ENCODE measurements at regions of chr2 and their contacts with region 1.

Region 1: GRCh38 chr2:152335010-152335725 is at the start of gene FMNL2:
- DNase-seq: peak; percentile 76
- H3K4me3 ChIP-seq: peak within 1 kb of the TSS; percentile 81
- H3K27ac ChIP-seq: peak within 1 kb of the TSS; percentile 70 to 81
- H3K4me1 ChIP-seq: peaks cover 4% of the 10 kb centered on the region
- H3K27me3 ChIP-seq: no peaks in the 10 kb centered on the region
- CTCF ChIP-seq: peak in 1 of 4 experiments; percentile 19
- POLR2A ChIP-seq: peak; percentile 82
- total RNA-seq, gene FMNL2: 9.8 to 19.4 TPM

Region 2: DNA sequence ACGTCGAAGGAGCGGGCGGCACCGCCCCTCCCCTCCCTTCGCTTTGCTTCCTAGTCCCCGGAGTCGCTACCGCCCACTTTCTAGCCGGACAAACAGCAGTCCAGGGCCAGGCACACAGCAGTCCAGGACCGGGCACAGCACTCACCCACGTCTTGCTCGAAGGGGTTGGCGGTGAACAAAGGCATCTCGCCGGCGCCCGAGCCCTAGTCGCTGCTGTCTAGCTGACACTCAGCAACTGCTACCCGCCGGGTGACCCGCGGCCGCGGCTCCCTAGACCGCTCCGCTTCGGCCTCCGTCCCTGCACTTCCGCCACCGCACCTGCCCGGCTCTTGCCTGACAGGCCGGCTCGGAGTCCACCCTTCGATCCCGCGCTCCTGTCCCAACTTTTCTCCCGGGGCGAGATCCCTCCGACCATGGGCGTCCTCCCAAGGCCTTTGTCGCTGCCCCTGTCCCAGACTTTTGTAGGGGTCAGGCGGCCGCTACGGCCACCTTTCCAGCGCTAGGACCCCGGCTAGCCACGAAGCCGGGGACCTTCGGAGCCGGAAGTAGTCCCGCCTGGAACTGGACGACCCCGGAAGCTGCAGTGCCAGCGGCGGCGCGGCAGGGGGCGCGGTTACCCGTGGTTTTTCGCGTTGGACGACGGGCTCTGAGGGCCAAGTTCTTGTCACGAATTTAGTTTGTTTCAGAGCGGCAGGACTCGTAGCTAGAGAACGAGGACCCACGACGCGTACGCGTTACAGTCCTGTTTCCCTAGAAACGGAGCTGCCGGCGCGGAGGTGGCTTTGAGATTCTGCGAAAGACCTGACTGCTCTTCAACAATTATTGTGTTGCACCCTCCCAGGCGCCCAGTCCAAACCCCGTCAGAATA is 159.5 kb before region 1 on chr2 and contains the start of gene STAM2:
- intact Hi-C with region 1: loop called (anchors 5 kb)
- DNase-seq: peak; percentile 92
- H3K4me3 ChIP-seq: peak within 1 kb of the TSS; percentile 67 to 75
- H3K27ac ChIP-seq: peak within 1 kb of the TSS; percentile 97
- H3K4me1 ChIP-seq: no peaks in the 10 kb centered on the region
- H3K27me3 ChIP-seq: no peaks in the 10 kb centered on the region
- CTCF ChIP-seq: peak; percentile 93 to 98 (median 96)
- POLR2A ChIP-seq: peak; percentile 82
- total RNA-seq, gene STAM2: 28.7 to 39.3 TPM

Region 3: DNA sequence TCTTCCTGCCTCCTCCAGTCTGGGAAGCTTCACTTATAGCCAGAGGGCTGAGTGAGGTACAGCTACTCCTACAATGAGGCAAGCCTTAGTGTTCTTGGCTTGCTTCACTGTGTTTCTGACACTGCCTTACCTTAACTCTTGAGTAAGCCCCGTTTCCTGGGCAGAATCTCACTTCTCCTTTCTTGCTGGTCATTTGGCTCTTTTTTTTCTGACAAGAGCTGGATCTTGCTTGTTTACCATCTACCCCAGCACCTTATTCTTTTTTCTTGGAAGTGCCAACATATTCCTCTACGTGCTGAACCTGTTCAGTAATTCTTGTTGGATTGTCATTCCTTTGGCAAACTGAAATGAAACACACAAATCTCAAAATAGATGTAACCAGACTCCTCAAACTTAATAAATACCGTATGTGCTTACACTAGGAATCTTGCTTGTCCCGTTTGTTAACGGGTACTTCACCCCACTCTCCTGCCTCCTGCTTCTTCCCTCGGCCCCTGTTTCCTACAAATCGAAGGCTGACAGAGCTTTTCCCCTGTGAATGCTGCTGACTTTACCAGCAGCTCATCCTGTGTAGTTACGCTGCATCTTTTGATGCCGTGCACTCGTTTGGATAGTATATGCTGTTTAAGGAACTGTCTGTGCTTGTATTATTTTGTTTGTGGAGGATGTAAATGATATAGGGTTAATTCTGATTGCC is 132.0 kb after region 1 on chr2:
- intact Hi-C with region 1: loop called (anchors 5 kb)
- DNase-seq: peak; percentile 66
- H3K4me3 ChIP-seq: no peak overlapping the region
- H3K27ac ChIP-seq: peak overlapping the region; percentile 21 to 66
- H3K4me1 ChIP-seq: peaks cover 7% of the 10 kb centered on the region
- H3K27me3 ChIP-seq: no peaks in the 10 kb centered on the region
- CTCF ChIP-seq: no peak
- POLR2A ChIP-seq: peak; percentile 14

Region 4: DNA sequence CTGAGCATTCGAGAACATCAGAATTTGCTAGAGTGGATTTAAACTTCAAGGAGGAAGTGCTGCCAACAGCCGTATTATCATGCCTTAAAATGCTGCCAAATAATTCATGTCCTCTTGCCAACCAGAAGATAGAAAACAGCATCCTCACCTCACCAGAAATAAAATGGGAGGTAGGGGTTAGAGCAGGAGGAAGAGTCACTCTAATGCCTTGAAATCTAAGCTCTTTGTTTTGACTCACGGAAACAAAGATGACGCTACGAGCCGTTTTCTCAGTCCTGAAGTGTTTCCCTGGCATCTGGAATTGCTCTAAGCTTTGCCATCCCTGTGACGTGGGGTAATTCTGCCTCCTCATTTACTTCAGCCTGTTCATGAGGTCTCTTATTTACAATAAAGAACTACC is 285.0 kb after region 1 on chr2:
- intact Hi-C with region 1: loop called (anchors 5 kb)
- DNase-seq: no peak
- H3K4me3 ChIP-seq: no peak overlapping the region
- H3K27ac ChIP-seq: peak overlapping the region in 1 of 2 donors; percentile 0
- H3K4me1 ChIP-seq: no peaks in the 10 kb centered on the region
- H3K27me3 ChIP-seq: no peaks in the 10 kb centered on the region
- CTCF ChIP-seq: no peak
- POLR2A ChIP-seq: no peak